Colonic mucosa (tissue), 4 donors: ENCODE measurements at regions of chr3 and their contacts with region 1.

Region 1: DNA sequence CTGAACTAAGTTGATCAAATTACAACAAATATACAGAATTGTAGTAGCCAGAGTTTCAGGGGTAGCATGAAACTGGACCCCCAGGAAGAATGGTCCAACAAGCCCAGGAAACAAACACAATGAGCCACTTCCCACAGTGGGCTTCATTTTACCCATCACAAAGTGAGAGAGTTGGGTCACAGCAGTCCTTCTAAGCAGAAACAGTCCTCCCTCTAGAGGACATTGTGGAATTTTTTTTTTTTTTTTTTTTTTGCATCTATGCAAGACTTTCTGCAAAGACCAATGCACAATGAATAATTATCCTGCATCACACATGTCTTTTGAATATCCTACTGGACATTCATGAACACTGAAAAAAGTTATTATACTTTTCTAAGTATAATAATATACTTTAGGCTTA is 73.8 kb upstream of the ATP13A5 start:
- DNase-seq: no peak
- H3K4me3 ChIP-seq: no peak overlapping the region
- H3K27ac ChIP-seq: no peak overlapping the region
- H3K4me1 ChIP-seq: no peaks in the 10 kb centered on the region
- H3K27me3 ChIP-seq: no peaks in the 10 kb centered on the region
- CTCF ChIP-seq: no peak

Region 2: GRCh38 chr3:193207290-193208273 is 244.8 kb before region 1 on chr3:
- intact Hi-C with region 1: loop called (anchors 10 kb)
- DNase-seq: no peak
- H3K4me3 ChIP-seq: no peak overlapping the region
- H3K27ac ChIP-seq: no peak overlapping the region
- H3K4me1 ChIP-seq: no peaks in the 10 kb centered on the region
- H3K27me3 ChIP-seq: no peaks in the 10 kb centered on the region
- CTCF ChIP-seq: no peak